ENCODE measurements at regions of chr6 and their contacts with region 1.

Region 1: GRCh38 chr6:150813319-150813992 is 52.0 kb upstream of the MTHFD1L start:
- DNase-seq: no peak
- H3K4me3 ChIP-seq: no peak overlapping the region
- H3K27ac ChIP-seq: peak overlapping the region in 1 of 2 donors; percentile 55
- H3K4me1 ChIP-seq: no peaks in the 10 kb centered on the region
- H3K27me3 ChIP-seq: no peaks in the 10 kb centered on the region
- CTCF ChIP-seq: no peak
- POLR2A ChIP-seq: no peak

Region 2: GRCh38 chr6:150079604-150080003 is 733.9 kb before region 1 on chr6:
- intact Hi-C with region 1: loop called (anchors 10 kb)
- DNase-seq: no peak
- H3K4me3 ChIP-seq: no peak overlapping the region
- H3K27ac ChIP-seq: no peak overlapping the region
- H3K4me1 ChIP-seq: no peaks in the 10 kb centered on the region
- H3K27me3 ChIP-seq: no peaks in the 10 kb centered on the region
- CTCF ChIP-seq: no peak
- POLR2A ChIP-seq: no peak

Region 3: DNA sequence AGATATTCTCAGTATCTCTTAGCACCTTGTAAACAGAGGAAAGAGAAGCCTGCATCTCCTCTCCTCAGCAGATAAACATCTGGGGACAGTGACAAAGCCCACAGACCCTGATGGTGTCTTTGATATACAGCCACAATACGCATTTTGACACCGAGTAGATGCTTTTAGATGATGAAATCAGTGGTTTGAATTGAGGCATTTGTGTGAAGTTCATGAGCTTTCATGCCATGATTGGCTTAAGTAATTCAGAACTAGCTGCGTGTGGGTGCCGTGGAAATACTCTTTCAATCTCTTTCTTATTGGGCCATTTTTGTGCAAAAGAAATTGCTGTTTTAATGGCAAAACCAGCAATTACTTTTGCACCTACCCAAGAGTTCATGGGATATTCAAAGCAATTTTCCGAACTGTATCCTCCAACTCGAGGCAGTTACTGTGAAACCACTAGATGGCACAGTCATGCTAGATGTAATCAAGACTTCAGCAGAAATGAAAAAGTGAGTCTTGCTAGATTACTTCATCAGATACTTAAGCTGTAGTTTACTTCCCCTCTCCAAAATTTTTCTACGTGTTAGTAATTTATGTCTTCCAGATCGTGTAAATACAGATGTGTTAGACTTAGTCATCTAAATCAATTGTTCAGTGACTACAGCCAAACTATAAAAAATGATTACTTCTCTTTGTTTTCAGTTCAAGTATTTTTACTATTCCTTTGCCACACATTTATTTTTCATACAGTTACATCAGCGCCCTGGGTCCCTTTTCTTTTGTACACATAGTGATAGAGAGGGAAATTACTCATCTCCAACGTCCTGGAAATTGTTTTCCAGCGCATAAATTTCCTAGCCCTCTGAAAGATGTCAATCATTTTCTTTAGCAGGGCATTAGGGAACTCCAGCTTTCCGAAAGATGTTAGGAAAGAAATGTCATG is 395.3 kb before region 1 on chr6:
- intact Hi-C with region 1: loop called (anchors 5 kb)
- DNase-seq: peak in 1 of 2 donors; percentile 50
- H3K4me3 ChIP-seq: peak overlapping the region; percentile 20 to 38
- H3K27ac ChIP-seq: peak overlapping the region; percentile 64 to 70
- H3K4me1 ChIP-seq: no peaks in the 10 kb centered on the region
- H3K27me3 ChIP-seq: no peaks in the 10 kb centered on the region
- CTCF ChIP-seq: peak; percentile 79 to 87 (median 83)
- POLR2A ChIP-seq: no peak